Activated naive CD4-positive, alpha-beta T cell treated with anti-CD3 and anti-CD28 coated beads for 36 hours (primary cell): ENCODE measurements at regions of chr1 and their contacts with region 1.

Region 1: DNA sequence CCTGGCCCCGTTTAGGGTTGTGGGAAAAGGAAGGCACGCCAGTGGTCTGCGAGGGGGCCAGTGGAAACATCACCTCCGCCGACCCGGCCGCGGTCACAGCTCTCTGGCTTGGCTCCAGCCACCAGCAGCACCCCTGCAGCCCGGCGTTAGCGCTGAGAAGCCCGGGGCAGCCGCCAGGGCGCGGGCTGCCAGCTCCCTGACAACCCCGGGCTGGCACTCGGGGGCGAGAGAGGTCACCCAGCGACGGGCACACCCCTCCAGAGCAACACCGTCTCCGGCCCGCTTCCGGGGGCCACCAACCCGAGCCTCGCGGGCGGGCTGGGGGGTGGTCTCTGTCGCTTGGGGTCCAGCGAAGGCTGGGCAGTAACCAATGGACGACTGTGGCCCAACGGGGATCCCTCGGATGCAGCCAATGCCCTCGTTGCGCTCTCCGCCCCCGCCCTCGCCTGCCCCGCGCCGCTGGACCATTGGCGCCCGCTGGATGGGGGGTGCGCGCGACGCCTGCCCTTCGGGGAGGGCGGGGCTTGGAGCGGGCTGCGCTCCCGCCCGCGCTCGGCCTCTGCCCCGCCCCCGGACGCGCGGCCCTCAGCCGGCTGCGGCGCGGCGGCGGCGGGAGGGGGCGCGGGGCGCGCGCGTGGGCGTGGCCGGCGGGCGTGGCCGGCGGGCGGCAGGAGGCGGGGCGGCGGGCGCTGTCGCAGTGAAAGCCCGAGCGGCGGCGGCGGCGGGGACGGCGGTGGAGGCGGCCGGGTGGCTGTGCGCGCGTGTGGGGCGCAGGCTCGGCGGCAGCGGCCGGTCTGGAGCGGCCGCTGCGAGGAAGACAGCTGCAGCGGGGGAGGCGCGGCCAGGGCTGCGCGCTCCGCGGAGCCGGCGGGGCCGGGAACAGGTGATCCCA is at the start of gene MAN1C1:
- DNase-seq: peak; percentile 72
- H3K4me3 Mint-ChIP-seq: peak within 1 kb of the TSS; percentile 88
- H3K27ac Mint-ChIP-seq: no peak within 1 kb of the TSS
- H3K4me1 Mint-ChIP-seq: peaks cover 52% of the 10 kb centered on the region
- H3K27me3 Mint-ChIP-seq: peaks cover 1% of the 10 kb centered on the region
- total RNA-seq, gene MAN1C1: 4.9 to 6.3 TPM

Region 2: GRCh38 chr1:25549273-25550154 is 66.8 kb before region 1 on chr1:
- CTCF ChIA-PET with region 1: interaction called, 12 read pairs
- intact Hi-C with region 1: loop called (anchors 2 kb)
- DNase-seq: peak; percentile 95
- H3K4me3 Mint-ChIP-seq: peak overlapping the region; percentile 71
- H3K27ac Mint-ChIP-seq: peak overlapping the region; percentile 93
- H3K4me1 Mint-ChIP-seq: peaks cover 89% of the 10 kb centered on the region
- H3K27me3 Mint-ChIP-seq: no peaks in the 10 kb centered on the region

Region 3: DNA sequence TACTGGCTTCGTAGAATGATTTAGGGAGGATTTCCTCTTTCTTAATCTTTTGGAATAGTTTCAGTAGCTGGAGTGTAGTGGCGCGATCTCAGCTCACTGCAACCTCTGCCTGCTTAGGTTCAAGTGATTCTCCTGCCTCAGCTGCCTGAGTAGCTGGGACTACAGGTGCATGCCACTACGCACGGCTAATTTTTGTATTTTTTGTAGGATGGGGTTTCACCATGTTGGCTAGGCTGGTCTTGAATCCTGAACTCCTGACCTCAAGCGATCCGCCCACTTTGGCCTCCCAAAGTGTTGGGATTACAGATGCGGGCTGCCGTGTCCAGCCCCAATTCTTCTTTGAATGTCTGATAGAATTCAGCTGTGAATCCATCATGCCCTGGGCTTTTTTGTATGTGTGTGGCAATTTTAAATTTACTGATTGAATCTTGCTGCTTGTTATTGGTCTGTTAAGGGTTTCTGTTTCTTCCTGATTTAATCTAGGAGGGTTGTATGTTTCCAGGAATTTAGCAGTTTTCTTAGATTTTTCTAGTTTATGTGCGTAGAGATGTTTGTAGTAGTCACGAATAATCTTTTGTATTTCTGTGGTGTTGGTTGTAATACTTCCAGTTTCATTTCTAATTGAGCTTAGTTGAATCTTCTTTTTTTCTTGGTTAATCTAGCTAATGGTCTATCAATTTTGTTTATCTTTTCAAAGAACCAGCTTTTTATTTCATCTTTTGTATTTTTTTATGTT is 15.6 kb after region 1 on chr1:
- CTCF ChIA-PET with region 1: interaction called, 30 read pairs
- intact Hi-C with region 1: loop called (anchors 1 kb)
- DNase-seq: peak; percentile 34
- H3K4me3 Mint-ChIP-seq: peak overlapping the region; percentile 82
- H3K27ac Mint-ChIP-seq: peak overlapping the region; percentile 87
- H3K4me1 Mint-ChIP-seq: peaks cover 71% of the 10 kb centered on the region
- H3K27me3 Mint-ChIP-seq: no peaks in the 10 kb centered on the region

Region 4: GRCh38 chr1:25664357-25665199 is 48.2 kb after region 1 on chr1:
- CTCF ChIA-PET with region 1: interaction called, 18 read pairs
- intact Hi-C with region 1: no loop called
- DNase-seq: no peak
- H3K4me3 Mint-ChIP-seq: no peak overlapping the region
- H3K27ac Mint-ChIP-seq: no peak overlapping the region
- H3K4me1 Mint-ChIP-seq: peaks cover 60% of the 10 kb centered on the region
- H3K27me3 Mint-ChIP-seq: no peaks in the 10 kb centered on the region

Region 5: GRCh38 chr1:25695090-25695770 is 78.9 kb after region 1 on chr1:
- CTCF ChIA-PET with region 1: interaction called, 20 read pairs
- intact Hi-C with region 1: loop called (anchors 2 kb)
- DNase-seq: no peak
- H3K4me3 Mint-ChIP-seq: peak overlapping the region; percentile 50
- H3K27ac Mint-ChIP-seq: peak overlapping the region; percentile 59
- H3K4me1 Mint-ChIP-seq: peaks cover 50% of the 10 kb centered on the region
- H3K27me3 Mint-ChIP-seq: no peaks in the 10 kb centered on the region

Region 6: GRCh38 chr1:25796811-25797458 is 180.6 kb after region 1 on chr1:
- CTCF ChIA-PET with region 1: interaction called, 46 read pairs
- intact Hi-C with region 1: loop called (anchors 2 kb)
- DNase-seq: peak; percentile 96
- H3K4me3 Mint-ChIP-seq: peak overlapping the region; percentile 76
- H3K27ac Mint-ChIP-seq: peak overlapping the region; percentile 75
- H3K4me1 Mint-ChIP-seq: peaks cover 58% of the 10 kb centered on the region
- H3K27me3 Mint-ChIP-seq: no peaks in the 10 kb centered on the region